ENCODE measurements at regions of chr7 and their contacts with region 1.

Region 1: DNA sequence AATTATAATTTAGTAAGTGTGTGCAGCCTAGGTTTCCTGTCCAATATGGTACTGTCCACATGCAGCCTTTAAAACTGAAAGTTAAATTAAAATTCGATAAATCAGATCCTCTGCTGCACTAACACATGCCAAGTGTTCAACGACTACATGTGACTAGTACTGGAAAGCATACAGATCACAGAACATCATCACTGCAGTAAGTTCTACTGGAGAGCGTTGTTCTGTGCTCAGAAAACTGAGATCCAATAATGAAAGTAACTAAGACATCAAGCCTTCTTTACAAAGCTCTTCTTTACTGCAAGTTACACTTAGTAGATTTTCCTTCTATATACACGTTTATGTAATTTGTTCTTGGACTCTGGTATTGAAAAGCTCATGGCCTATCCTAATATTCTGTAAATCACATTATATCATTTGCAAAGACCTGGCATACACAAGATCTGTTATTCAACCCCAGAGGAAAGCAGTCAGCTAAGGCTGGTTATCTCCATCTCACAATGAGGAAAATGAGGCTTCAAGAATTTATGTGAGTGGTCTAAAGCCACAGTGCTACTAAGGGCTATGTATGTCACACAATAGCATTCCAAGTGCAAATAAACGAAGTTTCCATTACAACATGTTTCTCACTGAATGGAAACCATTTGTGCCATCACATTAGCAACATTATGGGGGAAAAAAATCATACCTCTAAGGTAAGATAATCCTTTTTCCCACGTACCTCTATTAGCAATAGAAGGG is 77.6 kb downstream of the VPS41 start:
- DNase-seq: peak; percentile 15
- H3K4me3 Mint-ChIP-seq: peak overlapping the region; percentile 39
- H3K27ac Mint-ChIP-seq: peak overlapping the region; percentile 63
- H3K4me1 Mint-ChIP-seq: peaks cover 73% of the 10 kb centered on the region
- H3K27me3 Mint-ChIP-seq: no peaks in the 10 kb centered on the region
- CTCF ChIP-seq: no peak

Region 2: GRCh38 chr7:38630720-38631673 is 200.4 kb before region 1 on chr7 and contains the start of gene AMPH:
- CTCF ChIA-PET with region 1: no interaction called
- intact Hi-C with region 1: no loop called
- DNase-seq: no peak
- H3K4me3 Mint-ChIP-seq: no peak within 1 kb of the TSS
- H3K27ac Mint-ChIP-seq: no peak within 1 kb of the TSS
- H3K4me1 Mint-ChIP-seq: no peaks in the 10 kb centered on the region
- H3K27me3 Mint-ChIP-seq: peaks cover 75% of the 10 kb centered on the region
- CTCF ChIP-seq: no peak
- total RNA-seq, gene AMPH: not detected in 2 replicates

Region 3: GRCh38 chr7:38806912-38807311 is 24.5 kb before region 1 on chr7:
- CTCF ChIA-PET with region 1: interaction called, 16 read pairs
- intact Hi-C with region 1: loop called (anchors 2 kb)
- DNase-seq: no peak
- H3K4me3 Mint-ChIP-seq: no peak overlapping the region
- H3K27ac Mint-ChIP-seq: no peak overlapping the region
- H3K4me1 Mint-ChIP-seq: peaks cover 47% of the 10 kb centered on the region
- H3K27me3 Mint-ChIP-seq: no peaks in the 10 kb centered on the region
- CTCF ChIP-seq: no peak

Region 4: GRCh38 chr7:38863601-38864291 is 32.3 kb after region 1 on chr7:
- CTCF ChIA-PET with region 1: interaction called, 11 read pairs
- intact Hi-C with region 1: loop called (anchors 1 kb)
- DNase-seq: peak; percentile 96
- H3K4me3 Mint-ChIP-seq: peak overlapping the region; percentile 52
- H3K27ac Mint-ChIP-seq: peak overlapping the region; percentile 77
- H3K4me1 Mint-ChIP-seq: peaks cover 33% of the 10 kb centered on the region
- H3K27me3 Mint-ChIP-seq: no peaks in the 10 kb centered on the region
- CTCF ChIP-seq: no peak

Region 5: DNA sequence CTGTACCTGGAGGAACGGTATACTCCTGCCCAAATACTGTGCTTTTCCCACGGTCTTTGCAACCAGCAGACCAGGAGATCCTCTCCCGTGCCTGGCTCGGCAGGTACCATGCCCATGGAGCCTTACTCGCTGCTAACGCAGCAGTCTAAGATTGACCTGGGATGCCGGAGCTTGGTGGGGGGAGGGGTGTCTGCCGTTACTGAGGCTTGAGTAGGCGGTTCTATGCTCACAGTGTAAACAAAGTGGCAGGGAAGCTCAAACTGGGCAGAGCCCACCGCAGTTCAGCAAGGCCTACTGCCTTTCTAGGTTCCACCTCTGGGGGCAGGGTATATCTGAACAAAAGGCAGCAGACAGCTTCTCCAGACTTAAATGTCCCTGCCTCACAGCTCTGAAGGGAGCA is 54.8 kb after region 1 on chr7:
- CTCF ChIA-PET with region 1: interaction called, 4 read pairs
- intact Hi-C with region 1: loop called (anchors 2 kb)
- DNase-seq: peak; percentile 56
- H3K4me3 Mint-ChIP-seq: peak overlapping the region; percentile 40
- H3K27ac Mint-ChIP-seq: peak overlapping the region; percentile 68
- H3K4me1 Mint-ChIP-seq: peaks cover 65% of the 10 kb centered on the region
- H3K27me3 Mint-ChIP-seq: no peaks in the 10 kb centered on the region
- CTCF ChIP-seq: peak; percentile 49

Region 6: DNA sequence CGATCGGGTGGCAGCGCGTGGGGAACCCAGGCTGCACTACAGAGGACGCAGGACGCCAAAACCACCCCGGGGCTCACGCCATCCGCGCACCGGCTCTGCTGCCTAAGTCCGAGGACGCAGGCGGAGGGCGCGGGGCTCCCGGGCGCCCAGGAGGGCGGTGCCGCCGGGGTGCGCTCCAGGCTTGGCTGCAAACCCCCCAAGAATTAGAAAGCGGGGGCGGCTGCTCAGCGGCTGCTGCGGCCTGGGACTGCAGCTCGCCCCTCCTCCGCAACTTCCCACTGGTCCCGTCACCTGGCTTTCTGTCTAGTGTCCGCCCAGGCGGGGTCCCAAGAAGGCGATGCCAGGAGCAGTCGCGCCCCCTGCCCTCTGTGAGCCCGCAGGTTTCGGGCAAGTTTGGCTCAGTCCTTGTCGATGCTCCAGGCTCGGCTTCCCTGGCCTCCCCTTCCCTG is 144.5 kb after region 1 on chr7:
- CTCF ChIA-PET with region 1: no interaction called
- intact Hi-C with region 1: no loop called
- DNase-seq: no peak
- H3K4me3 Mint-ChIP-seq: no peak overlapping the region
- H3K27ac Mint-ChIP-seq: no peak overlapping the region
- H3K4me1 Mint-ChIP-seq: peaks cover 16% of the 10 kb centered on the region
- H3K27me3 Mint-ChIP-seq: no peaks in the 10 kb centered on the region
- CTCF ChIP-seq: no peak

Region 7: GRCh38 chr7:39144420-39144819 is 313.0 kb after region 1 on chr7:
- CTCF ChIA-PET with region 1: no interaction called
- intact Hi-C with region 1: no loop called
- DNase-seq: no peak
- H3K4me3 Mint-ChIP-seq: no peak overlapping the region
- H3K27ac Mint-ChIP-seq: no peak overlapping the region
- H3K4me1 Mint-ChIP-seq: no peaks in the 10 kb centered on the region
- H3K27me3 Mint-ChIP-seq: no peaks in the 10 kb centered on the region
- CTCF ChIP-seq: no peak